HCT116 (cell line): ENCODE measurements at regions of chr4 and their contacts with region 1.

Region 1: DNA sequence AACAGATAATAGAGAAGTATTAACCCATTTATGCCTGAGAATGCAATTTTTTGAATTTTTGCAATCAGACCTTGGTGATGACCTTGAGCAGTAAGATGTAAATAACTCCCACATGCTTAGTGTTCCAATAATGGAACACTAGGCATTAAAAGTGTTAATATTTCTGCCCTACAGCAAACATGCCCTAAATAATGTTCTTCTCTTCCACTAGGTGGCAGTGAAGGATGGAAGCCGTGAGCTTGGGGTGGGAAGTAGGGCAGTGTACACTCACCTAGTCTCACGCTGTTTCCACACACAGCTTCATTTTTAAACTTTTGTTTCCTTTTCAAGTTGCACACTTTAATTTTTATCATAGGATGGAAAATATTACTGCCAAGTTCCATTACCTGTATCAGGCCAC is 613.1 kb upstream of the HS3ST1 start:
- DNase-seq: no peak
- ATAC-seq: peak; percentile 64; the same call in 1 of the 2 replicates
- H3K4me3 ChIP-seq: no peak overlapping the region
- H3K27ac ChIP-seq: no peak overlapping the region
- H3K4me1 ChIP-seq: no peaks in the 10 kb centered on the region
- H3K27me3 ChIP-seq: no peaks in the 10 kb centered on the region
- CTCF ChIP-seq: peak; percentile 40 to 63 (median 46); a peak in 4 of 6 replicates
- POLR2A ChIP-seq: no peak
- RAD21 ChIP-seq: peak; percentile 68

Region 2: GRCh38 chr4:12633053-12633651 is 591.3 kb after region 1 on chr4:
- CTCF ChIA-PET with region 1: interaction called, 20 read pairs
- POLR2A ChIA-PET with region 1: no interaction called
- RAD21 ChIA-PET with region 1: interaction called in 1 of 2 experiments, 8 read pairs
- intact Hi-C with region 1: loop called (anchors 2 kb)
- DNase-seq: peak; percentile 79
- ATAC-seq: peak; percentile 100
- H3K4me3 ChIP-seq: no peak overlapping the region
- H3K27ac ChIP-seq: no peak overlapping the region
- H3K4me1 ChIP-seq: 0 out of 4 replicates have a peak, but pooled peaks cover 0 to 5% of the 10 kb centered on the region in 2 experiments
- H3K27me3 ChIP-seq: no peaks in the 10 kb centered on the region
- CTCF ChIP-seq: peak; percentile 66 to 91 (median 87)
- POLR2A ChIP-seq: no peak
- RAD21 ChIP-seq: peak; percentile 95